Caco-2 (cell line): ENCODE measurements at regions of chr3 and their contacts with region 1.

Region 1: DNA sequence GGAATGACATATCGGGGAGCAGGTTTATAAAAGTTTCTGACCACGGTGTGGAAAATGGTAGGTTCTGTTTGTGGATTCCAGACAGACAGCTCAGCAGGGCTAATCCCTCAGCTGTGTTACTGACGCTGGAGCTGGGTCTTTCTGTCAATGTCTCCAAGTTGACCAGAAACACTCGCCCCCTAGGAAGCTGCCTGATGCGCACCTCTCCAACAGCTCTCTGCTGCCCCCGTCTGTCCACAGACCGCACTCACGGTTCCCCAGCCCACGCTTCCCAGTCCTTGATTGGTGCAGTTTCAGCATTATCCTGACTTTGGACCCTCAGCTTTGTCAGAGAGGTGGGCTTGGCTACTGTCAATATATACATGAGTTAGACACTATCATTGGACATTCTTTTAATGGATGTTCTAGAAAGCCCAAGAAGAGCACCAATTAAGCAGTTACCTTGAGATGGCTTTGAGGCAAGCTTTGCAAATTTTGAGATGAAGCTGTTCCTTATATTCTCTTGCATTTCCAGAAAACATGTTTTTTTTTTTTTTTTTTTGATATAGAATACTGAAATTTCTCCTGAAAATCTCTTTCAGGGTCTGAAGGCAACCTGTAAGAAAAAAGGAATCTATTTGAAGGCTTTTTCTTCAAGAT is 98.9 kb upstream of the TBC1D5 start:
- DNase-seq: peak; percentile 75 to 86
- H3K4me3 ChIP-seq: no peak overlapping the region
- H3K4me3 Mint-ChIP-seq: no peak overlapping the region
- H3K27ac Mint-ChIP-seq: no peak overlapping the region
- H3K4me1 ChIP-seq: no peaks in the 10 kb centered on the region
- H3K4me1 Mint-ChIP-seq: peaks cover 5% of the 10 kb centered on the region
- H3K27me3 ChIP-seq: no peaks in the 10 kb centered on the region
- H3K27me3 Mint-ChIP-seq: no peaks in the 10 kb centered on the region
- CTCF ChIP-seq: peak; percentile 87 to 97

Region 2: GRCh38 chr3:17431004-17431403 is 410.3 kb before region 1 on chr3:
- CTCF ChIA-PET with region 1: interaction called, 4 read pairs
- POLR2A ChIA-PET with region 1: no interaction called
- intact Hi-C with region 1: loop called (anchors 1 kb)
- DNase-seq: no peak
- H3K4me3 ChIP-seq: no peak overlapping the region
- H3K4me3 Mint-ChIP-seq: no peak overlapping the region
- H3K27ac Mint-ChIP-seq: no peak overlapping the region
- H3K4me1 ChIP-seq: no peaks in the 10 kb centered on the region
- H3K4me1 Mint-ChIP-seq: no peaks in the 10 kb centered on the region
- H3K27me3 ChIP-seq: no peaks in the 10 kb centered on the region
- H3K27me3 Mint-ChIP-seq: no peaks in the 10 kb centered on the region
- CTCF ChIP-seq: peak; percentile 25 to 43

Region 3: DNA sequence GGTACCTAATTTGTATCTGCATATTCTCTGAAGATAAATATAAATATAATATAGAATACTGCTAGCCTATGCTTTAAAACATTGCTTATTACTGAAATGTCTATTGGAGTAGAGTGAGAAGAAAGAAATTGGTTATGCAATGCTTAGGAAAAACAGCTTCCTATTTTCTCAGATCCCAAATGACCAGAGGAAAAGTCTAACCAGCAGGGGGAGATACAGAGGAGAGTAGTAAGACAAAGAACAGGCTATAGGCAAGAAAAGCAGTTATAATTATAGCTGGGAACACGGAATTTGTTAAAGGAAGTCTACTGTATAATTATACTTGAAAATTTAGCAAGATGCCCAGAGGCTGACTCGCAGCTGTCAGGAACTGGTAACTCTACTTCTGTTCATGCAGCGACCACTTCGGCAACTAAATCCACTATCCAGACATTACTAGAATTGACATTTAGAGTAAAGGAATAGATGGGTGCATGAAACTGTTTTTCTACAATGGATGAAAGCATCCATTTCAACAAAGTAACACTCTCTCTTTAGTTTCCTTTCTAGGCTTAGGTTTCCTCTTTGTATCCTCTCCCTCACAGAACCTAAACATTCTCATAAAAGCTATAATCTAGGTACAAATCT is 196.1 kb before region 1 on chr3:
- CTCF ChIA-PET with region 1: interaction called, 23 read pairs
- POLR2A ChIA-PET with region 1: no interaction called
- intact Hi-C with region 1: loop called (anchors 1 kb)
- DNase-seq: peak in 1 of 2 experiments; percentile 67
- H3K4me3 ChIP-seq: no peak overlapping the region
- H3K4me3 Mint-ChIP-seq: no peak overlapping the region
- H3K27ac Mint-ChIP-seq: no peak overlapping the region
- H3K4me1 ChIP-seq: peaks cover 4% of the 10 kb centered on the region
- H3K4me1 Mint-ChIP-seq: no peaks in the 10 kb centered on the region
- H3K27me3 ChIP-seq: no peaks in the 10 kb centered on the region
- H3K27me3 Mint-ChIP-seq: no peaks in the 10 kb centered on the region
- CTCF ChIP-seq: peak; percentile 64 to 83

Region 4: GRCh38 chr3:17798003-17798402 is 43.3 kb before region 1 on chr3:
- CTCF ChIA-PET with region 1: interaction called, 5 read pairs
- POLR2A ChIA-PET with region 1: no interaction called
- intact Hi-C with region 1: loop called (anchors 1 kb)
- DNase-seq: peak; percentile 41 to 46
- H3K4me3 ChIP-seq: no peak overlapping the region
- H3K4me3 Mint-ChIP-seq: no peak overlapping the region
- H3K27ac Mint-ChIP-seq: no peak overlapping the region
- H3K4me1 ChIP-seq: no peaks in the 10 kb centered on the region
- H3K4me1 Mint-ChIP-seq: peaks cover 8% of the 10 kb centered on the region
- H3K27me3 ChIP-seq: no peaks in the 10 kb centered on the region
- H3K27me3 Mint-ChIP-seq: no peaks in the 10 kb centered on the region
- CTCF ChIP-seq: peak; percentile 26 to 34